ENCODE measurements at regions of chr7 and their contacts with region 1.

Region 1: DNA sequence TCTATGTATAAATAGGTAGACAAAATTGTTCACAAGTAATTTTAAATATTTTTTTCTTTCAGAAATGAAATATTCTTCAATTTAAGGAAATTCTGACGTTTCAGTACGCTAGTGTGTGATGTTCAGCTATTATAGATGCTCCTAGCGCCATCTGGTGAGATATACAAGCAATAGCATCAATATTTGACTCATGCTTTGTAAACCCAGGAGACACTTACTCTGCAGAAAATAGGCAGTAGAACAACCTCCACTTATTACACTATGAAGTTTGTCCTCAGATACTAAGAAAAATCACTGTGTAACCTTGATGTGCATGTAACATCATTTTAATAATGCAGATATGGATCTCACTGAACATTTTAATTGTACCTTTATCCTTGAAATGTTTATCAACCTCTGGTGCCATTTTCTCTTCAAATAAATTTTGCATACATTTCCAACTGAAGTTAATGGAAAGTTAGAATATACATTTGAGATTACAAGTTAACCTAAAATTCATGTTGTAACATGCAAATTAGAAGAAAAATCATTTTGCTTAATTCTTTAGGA is 151.5 kb upstream of the FAM3C start:
- DNase-seq: no peak
- ATAC-seq: peak; percentile 91
- H3K4me3 ChIP-seq: no peak overlapping the region
- H3K27ac ChIP-seq: no peak overlapping the region
- H3K4me1 ChIP-seq: no peaks in the 10 kb centered on the region
- H3K27me3 ChIP-seq: no peaks in the 10 kb centered on the region
- CTCF ChIP-seq: peak; percentile 78

Region 2: GRCh38 chr7:121360564-121360963 is 187.1 kb before region 1 on chr7:
- intact Hi-C with region 1: loop called (anchors 5 kb)
- DNase-seq: no peak
- ATAC-seq: no peak
- H3K4me3 ChIP-seq: no peak overlapping the region
- H3K27ac ChIP-seq: no peak overlapping the region
- H3K4me1 ChIP-seq: no peaks in the 10 kb centered on the region
- H3K27me3 ChIP-seq: no peaks in the 10 kb centered on the region
- CTCF ChIP-seq: no peak

Region 3: DNA sequence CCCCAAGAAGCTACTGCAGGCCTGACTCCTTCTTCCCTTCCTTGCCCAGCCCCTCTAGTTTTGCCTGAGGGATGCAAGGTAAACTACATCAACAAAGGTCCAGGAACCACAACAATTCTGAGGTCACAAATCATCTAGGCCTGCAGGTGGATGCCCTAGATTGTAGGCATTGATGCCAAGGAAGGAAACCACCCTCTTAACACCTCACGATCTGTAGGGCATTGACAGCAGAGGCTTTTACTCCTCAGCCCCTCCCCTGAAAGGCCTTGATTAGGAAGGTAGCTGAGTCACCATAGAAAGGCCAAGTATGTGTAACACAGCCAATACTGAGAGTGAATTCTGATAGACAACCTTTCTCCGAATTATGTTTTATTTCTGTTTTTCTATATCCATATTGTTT is 104.8 kb before region 1 on chr7:
- intact Hi-C with region 1: no loop called
- DNase-seq: no peak
- ATAC-seq: no peak
- H3K4me3 ChIP-seq: no peak overlapping the region
- H3K27ac ChIP-seq: no peak overlapping the region
- H3K4me1 ChIP-seq: peaks cover 16% of the 10 kb centered on the region
- H3K27me3 ChIP-seq: no peaks in the 10 kb centered on the region
- CTCF ChIP-seq: no peak

Region 4: GRCh38 chr7:121459148-121459547 is 88.5 kb before region 1 on chr7:
- intact Hi-C with region 1: no loop called
- DNase-seq: no peak
- ATAC-seq: no peak
- H3K4me3 ChIP-seq: no peak overlapping the region
- H3K27ac ChIP-seq: no peak overlapping the region
- H3K4me1 ChIP-seq: no peaks in the 10 kb centered on the region
- H3K27me3 ChIP-seq: no peaks in the 10 kb centered on the region
- CTCF ChIP-seq: no peak

Measured in upper lobe of right lung (tissue), 1 donor.